Activated CD4-positive, alpha-beta T cell treated with anti-CD3 and anti-CD28 coated beads, Interleukin-2, amount 10 ng/mL, durations not matched to agents 24 days and 14 days (primary cell): ENCODE measurements at regions of chr11 and their contacts with region 1.

Region 1: DNA sequence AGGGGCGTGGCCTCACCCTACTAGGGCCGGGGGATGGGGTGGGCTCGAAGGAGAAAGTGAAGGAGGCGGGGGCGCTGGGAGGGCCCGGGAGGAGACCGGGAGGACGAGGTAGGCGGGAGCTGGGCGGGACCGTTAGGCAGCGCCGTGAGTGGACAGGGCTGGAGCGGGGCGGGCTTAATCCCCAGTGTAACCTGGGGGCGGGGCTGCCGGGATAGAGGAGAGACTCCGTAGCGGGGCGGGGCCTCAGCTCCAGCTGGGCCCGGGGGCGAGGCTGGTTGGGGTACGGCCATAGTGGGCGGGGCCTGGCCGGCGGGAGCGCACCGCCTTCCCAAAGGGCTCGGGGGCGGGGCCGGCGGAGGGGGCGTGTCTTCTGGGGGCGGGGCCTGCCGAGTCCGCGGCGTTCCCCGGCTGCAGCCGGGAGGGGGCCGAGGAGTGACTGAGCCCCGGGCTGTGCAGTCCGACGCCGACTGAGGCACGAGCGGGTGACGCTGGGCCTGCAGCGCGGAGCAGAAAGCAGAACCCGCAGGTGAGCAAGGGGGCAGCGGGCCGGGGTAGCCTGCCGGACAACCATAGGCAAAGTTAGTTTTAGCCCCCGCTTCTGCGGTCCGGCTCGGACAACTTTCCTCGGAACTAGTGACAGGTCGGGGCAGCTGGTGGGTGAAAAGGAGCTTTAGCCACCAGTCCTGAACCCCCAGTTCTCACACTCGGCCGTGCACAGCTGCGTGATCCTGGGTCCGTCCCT is at the start of gene CD82:
- DNase-seq: peak; percentile 100
- H3K4me3 Mint-ChIP-seq: peak within 1 kb of the TSS; percentile 90
- H3K27ac Mint-ChIP-seq: peak within 1 kb of the TSS; percentile 88
- H3K4me1 Mint-ChIP-seq: peaks cover 51% of the 10 kb centered on the region
- H3K27me3 Mint-ChIP-seq: no peaks in the 10 kb centered on the region
- total RNA-seq, gene CD82: 448 and 469 TPM in 2 replicates

Region 2: GRCh38 chr11:44596525-44597276 is 31.3 kb after region 1 on chr11:
- intact Hi-C with region 1: loop called (anchors 1 kb)
- DNase-seq: peak; percentile 96
- H3K4me3 Mint-ChIP-seq: peak overlapping the region; percentile 75
- H3K27ac Mint-ChIP-seq: peak overlapping the region; percentile 96
- H3K4me1 Mint-ChIP-seq: peaks cover 79% of the 10 kb centered on the region
- H3K27me3 Mint-ChIP-seq: no peaks in the 10 kb centered on the region

Region 3: DNA sequence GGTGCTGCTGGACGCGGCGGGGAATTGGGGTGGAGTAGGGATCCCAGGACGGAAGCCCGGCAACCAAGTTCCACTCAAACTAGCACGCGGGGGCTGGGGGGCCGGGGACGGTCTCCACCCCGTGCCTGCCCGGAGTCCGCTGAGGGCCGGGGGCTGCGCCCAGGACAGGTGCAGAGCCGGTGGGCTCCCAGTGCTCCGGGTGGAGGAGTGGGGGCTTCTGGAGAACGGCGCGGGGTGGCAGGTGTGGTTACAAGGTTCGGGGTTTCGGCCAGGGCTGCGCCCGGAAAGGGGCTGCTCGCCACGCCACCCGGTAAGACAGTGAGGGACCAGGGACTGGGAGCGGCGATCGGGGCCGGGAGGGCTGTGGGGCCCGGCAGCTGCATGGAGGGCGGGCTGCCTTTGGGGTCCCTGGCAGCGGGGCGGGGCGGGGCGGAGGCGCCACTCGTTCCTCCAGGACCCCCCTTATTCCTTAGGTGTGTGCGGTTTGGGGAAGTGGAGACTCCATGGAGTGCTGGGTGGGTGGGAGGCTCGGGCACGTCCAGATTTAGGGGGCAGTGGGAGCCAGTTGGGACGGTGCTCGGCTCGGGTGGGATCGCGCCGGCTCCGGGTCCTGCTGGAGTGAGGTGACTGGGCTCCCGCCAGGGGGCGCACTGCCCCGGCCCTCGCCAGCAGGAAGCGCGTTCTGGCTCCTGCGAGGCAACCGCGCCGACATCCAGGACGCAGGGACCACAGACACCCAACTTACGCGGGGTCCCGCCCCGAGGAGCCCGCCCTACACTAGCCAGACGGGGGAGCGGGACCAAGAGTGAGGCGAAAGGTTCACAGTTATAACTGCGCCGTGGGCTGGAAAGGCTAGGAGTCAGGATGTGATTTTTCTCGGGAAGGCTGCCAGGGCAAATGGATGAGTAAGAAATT is 162.2 kb after region 1 on chr11:
- intact Hi-C with region 1: loop called (anchors 5 kb)
- DNase-seq: peak; percentile 93
- H3K4me3 Mint-ChIP-seq: peak overlapping the region; percentile 87
- H3K27ac Mint-ChIP-seq: peak overlapping the region; percentile 10
- H3K4me1 Mint-ChIP-seq: peaks cover 38% of the 10 kb centered on the region
- H3K27me3 Mint-ChIP-seq: peaks cover 41% of the 10 kb centered on the region

Region 4: DNA sequence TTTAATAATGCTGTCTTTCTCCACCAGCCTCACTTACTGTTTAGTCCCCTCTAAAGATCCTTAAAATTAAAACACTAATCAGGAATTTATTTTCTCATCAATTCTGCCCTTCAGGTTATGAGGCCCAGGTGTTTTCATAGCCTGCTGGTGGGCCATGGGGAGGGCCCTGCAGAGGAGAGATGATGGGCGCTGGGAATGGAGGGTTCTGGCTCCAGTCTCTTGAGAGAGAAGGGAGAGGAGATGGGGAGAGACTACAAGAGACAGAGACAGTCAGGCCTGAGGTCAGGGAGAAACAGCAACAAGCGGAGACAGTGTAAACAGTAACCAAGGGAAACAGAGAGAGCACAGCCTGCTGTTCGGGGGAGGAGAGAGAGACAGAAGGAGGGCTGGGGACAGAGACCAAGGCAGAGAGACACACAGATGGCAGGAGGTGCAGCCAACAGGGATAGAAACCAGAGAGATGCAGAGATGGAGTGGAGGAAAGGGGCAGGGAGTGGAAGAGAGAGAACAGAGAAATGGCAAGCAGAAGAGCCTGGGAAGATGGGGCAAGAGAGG is 908.0 kb after region 1 on chr11:
- intact Hi-C with region 1: no loop called
- DNase-seq: no peak
- H3K4me3 Mint-ChIP-seq: no peak overlapping the region
- H3K27ac Mint-ChIP-seq: no peak overlapping the region
- H3K4me1 Mint-ChIP-seq: no peaks in the 10 kb centered on the region
- H3K27me3 Mint-ChIP-seq: peaks cover 11% of the 10 kb centered on the region

Region 5: DNA sequence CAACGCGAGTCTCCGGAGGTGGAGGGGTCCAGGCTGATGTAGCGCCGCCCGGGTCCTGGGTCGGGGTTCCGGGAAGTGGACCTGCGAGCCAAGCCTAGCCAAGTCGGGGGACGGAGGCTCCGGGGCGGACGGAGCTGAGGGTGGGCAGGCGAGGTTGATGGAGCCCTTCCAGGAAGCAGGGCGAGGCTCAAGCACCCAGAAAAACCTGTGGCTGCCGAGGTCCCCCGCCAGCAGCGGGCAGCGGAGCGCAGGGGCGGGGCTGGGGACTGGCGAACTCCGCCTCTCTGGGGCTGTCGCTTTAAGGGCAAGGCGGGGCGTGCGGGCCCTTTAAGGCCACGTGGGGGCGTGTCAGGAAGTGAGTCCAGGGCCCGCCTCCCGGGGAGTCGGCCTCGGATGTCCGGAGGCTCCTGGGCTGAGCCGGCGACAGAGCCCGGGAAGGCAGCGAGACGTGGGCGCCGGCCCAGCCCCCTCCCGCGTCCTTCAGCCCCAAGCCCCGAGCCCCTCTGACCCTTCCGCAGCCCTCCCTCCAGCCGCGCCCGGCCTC is 1239.5 kb after region 1 on chr11 and contains the start of gene SLC35C1:
- intact Hi-C with region 1: loop called (anchors 10 kb)
- DNase-seq: peak; percentile 99
- H3K4me3 Mint-ChIP-seq: peak within 1 kb of the TSS; percentile 98
- H3K27ac Mint-ChIP-seq: peak within 1 kb of the TSS; percentile 96
- H3K4me1 Mint-ChIP-seq: peaks cover 32% of the 10 kb centered on the region
- H3K27me3 Mint-ChIP-seq: no peaks in the 10 kb centered on the region
- total RNA-seq, gene SLC35C1: 15.3 and 17.4 TPM in 2 replicates

Region 6: DNA sequence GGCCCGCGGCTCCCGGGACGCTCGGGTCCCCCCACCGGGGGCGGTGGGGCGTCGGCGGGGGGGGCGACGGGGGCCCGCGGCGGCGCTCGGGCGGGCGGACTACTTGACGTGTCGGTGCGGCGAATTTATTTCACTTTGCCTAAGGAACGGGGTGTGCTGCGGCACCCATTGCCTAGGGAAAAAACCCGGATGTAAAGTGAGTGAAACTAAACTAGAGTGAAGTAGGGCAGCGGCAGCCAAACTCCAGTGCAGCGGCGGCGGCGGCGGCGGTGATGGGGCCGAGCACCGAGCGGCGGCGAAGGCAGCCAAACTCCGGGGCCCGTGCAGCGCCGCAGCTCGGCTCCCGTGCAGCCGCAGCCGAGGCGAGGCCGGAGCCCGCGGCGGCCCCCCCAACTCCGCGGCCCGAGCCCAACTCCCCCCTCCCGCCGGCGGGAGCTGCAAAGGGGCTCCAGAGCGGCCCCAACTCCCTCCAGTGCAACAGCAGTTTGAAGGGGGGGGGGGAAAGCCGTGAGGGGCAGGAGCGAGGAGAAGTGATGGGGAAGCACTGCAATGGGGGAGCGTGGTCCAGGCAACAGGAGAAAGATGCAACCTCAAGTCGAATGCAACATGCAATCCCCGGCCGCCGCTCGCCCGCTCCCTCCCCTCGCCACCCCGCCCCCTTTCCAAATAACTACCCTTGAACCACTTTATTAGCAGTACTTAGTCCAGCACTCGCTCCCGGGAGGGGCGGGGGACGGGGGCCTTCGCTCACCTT is 1556.5 kb after region 1 on chr11:
- intact Hi-C with region 1: loop called (anchors 10 kb)
- DNase-seq: peak; percentile 94
- H3K4me3 Mint-ChIP-seq: peak overlapping the region; percentile 84
- H3K27ac Mint-ChIP-seq: peak overlapping the region; percentile 82
- H3K4me1 Mint-ChIP-seq: peaks cover 36% of the 10 kb centered on the region
- H3K27me3 Mint-ChIP-seq: no peaks in the 10 kb centered on the region